ENCODE measurements at regions of chr2 and their contacts with region 1.

Region 1: DNA sequence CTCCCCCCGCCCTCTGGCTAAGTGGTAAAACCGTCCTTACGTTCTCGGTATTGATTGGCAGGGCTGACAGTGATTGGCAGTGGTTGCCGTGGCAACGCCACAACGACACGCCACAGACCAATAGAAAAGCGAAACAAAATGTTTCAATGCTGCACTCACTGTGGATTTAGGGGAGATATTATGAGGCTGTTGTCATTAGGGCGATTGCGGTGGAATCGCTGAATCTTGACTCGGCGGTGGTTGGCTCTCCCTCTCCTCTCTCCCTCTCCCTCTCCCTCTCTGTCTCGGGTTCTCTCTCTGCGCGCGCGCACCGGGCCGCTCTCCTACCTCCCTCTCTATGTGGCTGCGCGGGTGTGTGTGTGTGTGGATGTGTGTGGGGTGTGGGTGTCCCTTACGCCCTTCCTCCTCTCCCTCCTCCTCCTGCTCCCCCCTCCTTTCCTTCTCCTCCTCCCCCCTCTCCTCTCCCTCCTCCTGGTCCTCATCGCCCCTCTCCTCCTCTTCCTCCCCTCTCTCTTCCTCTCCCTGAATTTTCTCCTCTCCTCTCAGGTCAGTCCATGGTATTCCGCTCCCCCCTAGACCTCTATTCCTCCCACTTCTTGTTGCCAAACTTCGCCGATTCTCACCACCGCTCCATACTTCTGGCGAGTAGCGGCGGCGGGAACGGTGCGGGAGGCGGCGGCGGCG is at the start of gene SIX3:
- DNase-seq: no peak
- ATAC-seq: peak; percentile 69
- H3K4me3 Mint-ChIP-seq: peak within 1 kb of the TSS; percentile 85
- H3K27ac Mint-ChIP-seq: peak within 1 kb of the TSS; percentile 46
- H3K4me1 Mint-ChIP-seq: peaks cover 63% of the 10 kb centered on the region
- H3K27me3 Mint-ChIP-seq: peaks cover 71% of the 10 kb centered on the region
- CTCF ChIP-seq: no peak
- total RNA-seq, gene SIX3: not detected in 2 replicates

Region 2: GRCh38 chr2:44715671-44716081 is 226.0 kb before region 1 on chr2:
- CTCF ChIA-PET with region 1: no interaction called
- POLR2A ChIA-PET with region 1: no interaction called
- intact Hi-C with region 1: loop called (anchors 5 kb)
- DNase-seq: no peak
- ATAC-seq: no peak
- H3K4me3 Mint-ChIP-seq: no peak overlapping the region
- H3K27ac Mint-ChIP-seq: peak overlapping the region; percentile 46
- H3K4me1 Mint-ChIP-seq: peaks cover 47% of the 10 kb centered on the region
- H3K27me3 Mint-ChIP-seq: no peaks in the 10 kb centered on the region
- CTCF ChIP-seq: no peak

Measured in activated B cell treated with CpG ODN at 0.5 μM for 24 hours (primary cell).